ENCODE measurements at regions of chr19 and their contacts with region 1.

Region 1: DNA sequence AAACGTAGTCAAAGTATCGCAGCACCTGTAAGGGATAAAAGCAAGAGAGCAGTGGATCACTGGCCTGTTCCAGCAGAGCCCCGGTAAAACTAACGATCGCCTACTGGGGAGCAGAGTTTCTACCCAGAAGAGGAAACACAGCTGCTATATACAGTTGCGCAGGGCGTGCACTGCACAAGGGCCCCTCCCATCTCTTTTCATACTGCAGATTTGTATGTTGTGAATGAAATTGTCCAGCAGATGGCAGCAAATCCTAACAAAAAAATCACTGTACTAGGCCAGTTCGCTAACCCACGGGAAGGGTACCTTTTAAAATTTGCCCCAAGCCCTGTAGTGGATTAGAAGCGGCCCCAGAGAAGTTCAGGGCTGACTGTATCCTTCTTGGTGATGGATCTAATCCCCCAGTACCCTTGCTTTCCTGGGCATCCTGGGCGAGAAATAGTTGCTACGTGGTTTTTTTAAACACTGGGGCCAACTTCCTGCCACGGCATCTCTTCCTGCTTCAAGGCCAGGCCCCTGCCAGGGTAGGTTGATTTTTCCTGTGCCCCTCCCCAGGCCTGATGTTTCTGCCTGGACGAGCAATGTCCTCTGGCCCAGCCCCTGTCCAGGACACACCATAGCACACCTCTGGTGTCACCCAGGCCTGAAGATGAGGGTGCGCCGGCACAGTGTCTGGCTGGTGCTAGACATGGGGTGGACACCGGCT is 127.0 kb downstream of the IER2 start:
- DNase-seq: peak in 5 of 10 donors; percentile 24 to 91 (median 41)

Region 2: GRCh38 chr19:13051267-13052165 is 225.7 kb before region 1 on chr19:
- intact Hi-C with region 1: no loop called
- DNase-seq: peak in 7 of 10 donors; percentile 57 to 94 (median 68)

Region 3: GRCh38 chr19:13430790-13431582 is 153.7 kb after region 1 on chr19:
- intact Hi-C with region 1: loop called (anchors 2 kb)
- DNase-seq: peak in 9 of 10 donors; percentile 13 to 91 (median 52)

Region 4: DNA sequence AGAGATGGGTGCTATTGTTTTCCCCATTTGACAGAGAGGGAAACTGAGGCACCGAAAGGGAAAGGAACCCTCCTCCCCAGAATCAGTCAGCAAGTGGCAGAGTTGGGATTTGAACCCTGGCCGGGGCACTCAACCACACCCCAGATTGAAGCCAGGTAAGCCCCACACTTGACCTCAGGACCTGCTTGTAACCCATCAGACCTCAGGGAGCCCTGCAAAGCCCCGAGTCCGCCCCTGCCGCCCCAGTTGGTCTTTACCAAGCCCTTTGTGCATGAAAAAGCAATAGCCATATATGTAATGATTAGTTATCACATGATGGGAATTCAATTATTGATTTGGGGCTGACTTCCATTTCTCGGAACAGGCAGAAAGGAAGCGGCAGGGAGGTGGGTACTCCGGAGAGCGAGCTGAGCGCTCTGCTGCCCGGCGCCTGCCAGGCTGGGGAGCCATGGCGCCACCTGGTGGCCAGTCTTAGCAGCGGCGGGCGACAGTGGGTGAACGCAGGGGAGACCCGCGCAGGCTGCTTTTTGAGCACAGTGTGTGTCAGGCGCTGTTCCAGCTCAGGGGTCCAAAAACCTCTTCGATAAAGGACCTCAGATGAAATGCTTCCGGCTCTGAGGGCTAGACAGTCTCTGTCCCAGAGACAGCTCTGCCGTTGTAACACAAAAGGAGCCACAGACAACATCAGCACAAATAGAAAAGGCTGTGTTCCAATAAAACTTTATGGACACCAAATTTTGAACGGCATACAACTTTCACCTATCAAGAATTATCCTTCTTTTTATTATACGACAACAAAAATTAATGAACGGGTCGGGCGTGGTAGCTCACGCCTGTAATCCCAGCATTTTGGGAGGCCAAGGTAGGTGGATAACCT is 311.9 kb after region 1 on chr19:
- intact Hi-C with region 1: loop called (anchors 1 kb)
- DNase-seq: peak; percentile 62 to 97 (median 80)

Region 5: DNA sequence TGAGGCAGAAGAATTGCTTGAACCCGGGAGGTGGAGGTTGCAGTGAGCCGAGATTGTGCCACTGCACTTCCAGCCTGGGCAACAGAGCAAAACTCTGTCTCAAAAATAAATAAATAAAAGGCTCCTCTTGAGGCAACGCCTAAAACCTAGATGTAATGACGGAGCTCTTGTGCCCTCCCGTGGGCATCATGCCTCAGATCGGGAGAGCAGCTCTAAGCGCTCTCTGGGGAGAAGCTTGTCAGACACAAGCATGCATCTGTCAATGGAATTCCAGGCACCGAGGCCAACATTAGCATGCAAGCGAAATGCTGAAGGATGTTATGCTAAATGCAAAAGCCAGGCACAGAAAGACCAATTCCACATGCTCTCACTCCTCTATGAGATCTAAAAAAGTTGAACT is 441.5 kb after region 1 on chr19:
- intact Hi-C with region 1: loop called (anchors 5 kb)
- DNase-seq: peak; percentile 41 to 96 (median 74)

Measured in posterior cingulate gyrus (tissue), 11 donors.